Heart right ventricle (tissue), 16 donors: ENCODE measurements at regions of chr3 and their contacts with region 1.

Region 1: GRCh38 chr3:107927361-107928083 is 163.3 kb downstream of the CD47 start:
- DNase-seq: peak; percentile 43 to 73
- ATAC-seq: peak; percentile 95 to 99 (median 97)
- H3K4me3 ChIP-seq: peak overlapping the region; percentile 23 to 72 (median 58)
- H3K27ac ChIP-seq: peak overlapping the region in 1 of 10 donors; percentile 5
- H3K4me1 ChIP-seq: peaks cover 0 to 18% (median 8%) of the 10 kb centered on the region in 9 donors
- H3K27me3 ChIP-seq: peaks cover 0 to 21% (median 0%) of the 10 kb centered on the region in 7 donors
- CTCF ChIP-seq: peak; percentile 86 to 98 (median 93)

Region 2: DNA sequence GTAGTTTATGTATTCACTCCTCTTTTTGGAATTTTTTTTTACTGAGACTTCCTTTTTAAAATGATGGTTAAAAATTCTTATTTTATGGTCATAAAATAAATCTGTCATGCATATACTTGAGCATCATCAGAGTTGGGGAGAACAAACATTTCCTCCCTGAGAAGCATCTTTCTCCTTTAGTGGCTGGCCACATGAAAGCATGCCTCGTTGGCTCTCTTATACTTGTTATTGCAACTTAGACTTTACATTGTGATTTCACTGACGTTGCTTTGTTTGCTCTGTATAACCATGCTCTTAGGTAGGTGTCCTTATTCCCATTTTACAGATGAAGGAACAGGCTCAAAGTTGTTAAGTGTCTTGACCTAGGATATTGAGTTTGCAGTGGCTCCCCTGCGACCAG is 386.7 kb before region 1 on chr3:
- intact Hi-C with region 1: no loop called
- DNase-seq: no peak
- ATAC-seq: no peak
- H3K4me3 ChIP-seq: no peak overlapping the region
- H3K27ac ChIP-seq: no peak overlapping the region
- H3K4me1 ChIP-seq: no peaks in the 10 kb centered on the region
- H3K27me3 ChIP-seq: no peaks in the 10 kb centered on the region
- CTCF ChIP-seq: no peak

Region 3: GRCh38 chr3:107660306-107660976 is 267.1 kb before region 1 on chr3:
- intact Hi-C with region 1: loop called in 2 of 10 experiments (anchors 5 to 10 kb)
- DNase-seq: no peak
- ATAC-seq: no peak
- H3K4me3 ChIP-seq: no peak overlapping the region
- H3K27ac ChIP-seq: no peak overlapping the region
- H3K4me1 ChIP-seq: peaks cover 0 to 37% (median 25%) of the 10 kb centered on the region in 9 donors
- H3K27me3 ChIP-seq: no peaks in the 10 kb centered on the region
- CTCF ChIP-seq: peak; percentile 9 to 73 (median 62)

Region 4: DNA sequence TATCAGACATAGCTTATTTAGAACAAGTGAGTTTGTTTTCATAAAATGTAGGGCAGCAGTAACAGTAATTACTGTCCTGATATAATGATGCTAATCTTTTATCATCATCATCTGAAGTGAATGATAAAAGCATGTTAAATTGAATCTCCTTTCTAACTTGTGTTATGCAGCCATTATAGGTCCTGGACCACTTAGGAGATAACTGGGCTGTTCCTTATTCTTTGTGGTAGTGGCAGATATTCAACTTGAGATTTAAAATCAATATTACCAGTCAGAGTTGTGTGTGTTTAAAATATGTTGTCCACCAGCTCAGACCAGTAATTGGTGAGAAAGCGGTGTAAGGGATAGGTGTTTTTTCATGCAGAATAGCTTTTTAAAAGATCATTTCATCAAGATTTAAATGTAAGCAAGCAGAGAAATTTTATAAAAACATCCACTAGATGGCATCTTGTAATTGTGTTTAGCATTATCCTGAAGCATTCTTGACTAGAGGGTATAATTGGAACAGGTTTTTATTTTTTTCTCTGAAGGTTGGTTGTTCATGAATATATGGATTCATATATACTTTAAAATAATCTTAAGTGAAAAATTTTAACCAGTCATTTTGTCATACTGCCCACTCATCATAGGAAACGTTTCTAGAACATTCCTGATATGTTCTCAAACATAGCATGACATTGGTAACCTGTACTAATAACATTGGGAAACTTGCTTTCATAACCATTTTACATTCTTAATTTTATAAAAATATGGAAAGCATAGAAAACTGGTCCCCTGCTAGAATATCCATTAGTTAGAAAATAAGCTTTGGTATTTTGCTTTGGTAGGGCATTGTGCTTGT is 250.8 kb before region 1 on chr3:
- intact Hi-C with region 1: loop called in 2 of 10 experiments (anchors 5 to 10 kb)
- DNase-seq: no peak
- ATAC-seq: peak in 3 of 8 donors; percentile 48 to 64 (median 53)
- H3K4me3 ChIP-seq: no peak overlapping the region
- H3K27ac ChIP-seq: no peak overlapping the region
- H3K4me1 ChIP-seq: peaks cover 0 to 39% (median 16%) of the 10 kb centered on the region in 9 donors
- H3K27me3 ChIP-seq: no peaks in the 10 kb centered on the region
- CTCF ChIP-seq: peak; percentile 22 to 74 (median 61)

Region 5: DNA sequence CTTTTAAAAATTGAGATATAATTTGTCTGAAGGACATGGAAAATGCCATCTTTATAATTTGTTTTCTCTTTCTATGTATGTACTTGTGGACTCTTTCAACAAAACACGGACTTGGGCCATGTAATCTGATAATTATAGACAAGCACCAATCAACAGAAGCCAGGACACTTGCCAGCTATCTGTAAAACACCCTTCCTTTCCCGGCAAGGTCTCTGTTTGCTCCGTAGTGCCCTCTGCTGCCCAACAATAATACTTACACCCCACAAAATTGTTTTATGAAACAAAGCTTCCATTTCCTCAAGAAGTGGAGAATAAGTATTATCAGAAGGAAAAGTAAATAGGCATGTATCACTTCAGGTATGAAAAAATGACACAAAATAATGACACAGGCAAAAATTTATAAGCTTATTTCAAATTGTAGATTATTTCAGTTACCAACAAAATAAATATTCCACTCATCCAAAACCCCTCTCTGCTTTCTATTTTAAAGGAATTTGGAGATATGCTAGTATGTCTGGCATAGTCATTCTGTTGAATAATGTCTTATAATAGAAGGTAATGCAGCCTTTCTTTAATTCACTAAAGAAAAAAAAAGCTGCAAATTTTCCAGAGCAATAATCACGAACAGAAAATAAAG is 550.1 kb after region 1 on chr3:
- intact Hi-C with region 1: loop called in 3 of 10 experiments (anchors 10 kb)
- DNase-seq: peak; percentile 14 to 31
- ATAC-seq: peak in 4 of 8 donors; percentile 38 to 77 (median 60)
- H3K4me3 ChIP-seq: no peak overlapping the region
- H3K27ac ChIP-seq: no peak overlapping the region
- H3K4me1 ChIP-seq: peaks cover 0 to 7% (median 0%) of the 10 kb centered on the region in 9 donors
- H3K27me3 ChIP-seq: no peaks in the 10 kb centered on the region
- CTCF ChIP-seq: peak in 8 of 9 donors; percentile 50 to 80 (median 74)